K562 (cell line): ENCODE measurements at regions of chr6 and their contacts with region 1.

Region 1: DNA sequence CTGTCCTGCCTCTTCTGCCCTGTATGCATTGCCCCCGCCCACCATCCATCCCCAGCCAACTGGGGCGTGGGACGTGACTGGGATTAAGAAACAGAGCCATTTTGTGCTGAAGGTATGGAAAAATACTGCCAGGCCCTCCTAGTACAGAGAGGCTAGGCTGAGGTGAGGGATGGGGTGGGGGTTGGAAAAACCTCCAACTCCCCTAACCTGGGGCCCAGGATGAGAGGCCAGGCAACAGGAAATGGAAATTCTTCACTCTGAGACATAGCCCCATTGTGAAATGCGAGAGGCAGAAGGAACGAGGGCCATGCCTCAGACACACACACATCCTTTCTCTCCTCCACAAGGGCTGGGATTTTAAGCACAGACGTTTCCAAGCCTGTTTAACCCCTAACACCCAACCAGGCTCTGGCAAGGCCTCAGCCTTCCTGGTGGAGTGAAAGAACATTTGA is 19.9 kb downstream of the KCNK5 start:
- DNase-seq: no peak
- ATAC-seq: no peak
- H3K4me3 ChIP-seq: no peak overlapping the region
- H3K27ac ChIP-seq: no peak overlapping the region
- H3K4me1 ChIP-seq: peaks cover 40 to 42% of the 10 kb centered on the region in 2 experiments
- H3K27me3 ChIP-seq: no peaks in the 10 kb centered on the region
- CTCF ChIP-seq: no peak
- EP300 ChIP-seq: no peak
- POLR2A ChIP-seq: no peak
- RAD21 ChIP-seq: no peak

Region 2: GRCh38 chr6:39197521-39197920 is 11.9 kb before region 1 on chr6:
- CTCF ChIA-PET with region 1: no interaction called
- POLR2A ChIA-PET with region 1: interaction called, 30 read pairs
- in situ Hi-C with region 1: no loop called
- intact Hi-C with region 1: no loop called
- DNase-seq: no peak
- ATAC-seq: no peak
- H3K4me3 ChIP-seq: no peak overlapping the region
- H3K27ac ChIP-seq: no peak overlapping the region
- H3K4me1 ChIP-seq: peaks cover 22 to 31% of the 10 kb centered on the region in 2 experiments; a peak in 4 of 5 replicates
- H3K27me3 ChIP-seq: no peaks in the 10 kb centered on the region
- CTCF ChIP-seq: no peak
- EP300 ChIP-seq: no peak
- POLR2A ChIP-seq: no peak
- RAD21 ChIP-seq: no peak